ENCODE measurements at regions of chr12 and their contacts with region 1.

Region 1: DNA sequence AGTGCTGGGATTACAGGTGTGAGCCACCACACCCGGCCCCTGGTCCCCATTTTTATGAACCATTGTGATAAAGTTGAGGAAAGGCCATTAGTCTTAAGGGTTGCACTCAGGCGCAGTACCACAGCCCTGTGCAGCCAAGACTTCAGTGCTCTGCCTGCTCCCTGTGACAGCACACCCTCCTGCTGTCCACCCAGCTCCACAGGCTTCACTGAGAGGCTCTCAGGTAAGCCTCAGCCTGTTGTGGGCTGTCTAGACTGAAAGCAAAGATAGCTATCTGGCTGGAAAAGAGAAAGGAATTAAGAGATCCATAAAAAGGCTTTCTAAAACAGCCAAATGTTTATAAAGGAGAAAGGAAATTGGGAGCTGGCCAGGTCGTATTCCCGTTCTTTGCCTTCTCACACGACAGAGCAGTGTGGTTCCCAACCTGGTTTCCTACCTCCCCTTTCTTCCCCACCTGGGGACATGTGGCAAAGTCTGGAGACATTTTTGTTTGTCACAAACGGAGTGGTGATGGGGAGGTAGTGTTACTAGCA is 19.1 kb upstream of the DNM1L start:
- DNase-seq: no peak
- ATAC-seq: no peak
- H3K4me3 ChIP-seq: no peak overlapping the region
- H3K27ac ChIP-seq: peak overlapping the region; percentile 66
- H3K4me1 ChIP-seq: peaks cover 7% of the 10 kb centered on the region
- H3K27me3 ChIP-seq: no peaks in the 10 kb centered on the region

Region 2: GRCh38 chr12:31659087-31659933 is 1000.7 kb before region 1 on chr12 and contains the start of gene ETFBKMT:
- intact Hi-C with region 1: loop called in 1 of 4 experiments (anchors 10 kb)
- DNase-seq: peak; percentile 85 to 93 (median 93)
- ATAC-seq: peak; percentile 96
- H3K4me3 ChIP-seq: peak within 1 kb of the TSS; percentile 88
- H3K27ac ChIP-seq: peak within 1 kb of the TSS; percentile 97
- H3K4me1 ChIP-seq: no peaks in the 10 kb centered on the region
- H3K27me3 ChIP-seq: no peaks in the 10 kb centered on the region
- total RNA-seq, gene ETFBKMT: 4.8 to 6.9 (median 5.8) TPM

Region 3: DNA sequence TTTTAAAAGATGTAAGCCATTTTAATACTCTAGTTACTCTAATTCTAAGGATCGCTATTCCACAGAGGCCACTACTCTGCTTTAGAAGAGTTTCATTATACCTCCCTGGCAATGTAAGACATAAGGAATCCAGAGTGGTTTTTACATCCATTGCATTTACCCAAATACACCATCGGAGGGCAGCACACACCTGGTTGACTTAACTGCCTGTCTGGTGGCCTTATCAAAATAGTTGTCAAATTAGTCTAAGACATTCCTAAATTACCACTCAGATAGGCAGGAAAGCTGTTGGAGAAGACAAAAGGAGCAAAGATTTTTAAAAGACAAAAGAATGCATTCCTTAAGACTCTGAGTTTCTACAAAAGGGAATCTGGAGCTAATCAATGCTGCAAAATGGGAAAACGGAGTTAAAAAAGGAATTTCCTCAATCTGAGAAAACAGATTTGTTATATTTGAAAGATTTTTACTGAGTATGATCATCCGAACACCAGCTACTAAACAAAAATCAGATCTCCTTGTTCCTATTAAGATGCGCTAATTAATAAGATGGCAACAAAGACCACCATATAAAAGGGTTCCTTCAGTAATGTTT is 294.4 kb before region 1 on chr12:
- intact Hi-C with region 1: loop called in 2 of 4 experiments (anchors 5 kb)
- DNase-seq: peak in 1 of 3 donors; percentile 58
- ATAC-seq: peak; percentile 60 to 76
- H3K4me3 ChIP-seq: no peak overlapping the region
- H3K27ac ChIP-seq: no peak overlapping the region
- H3K4me1 ChIP-seq: no peaks in the 10 kb centered on the region
- H3K27me3 ChIP-seq: no peaks in the 10 kb centered on the region

Region 4: DNA sequence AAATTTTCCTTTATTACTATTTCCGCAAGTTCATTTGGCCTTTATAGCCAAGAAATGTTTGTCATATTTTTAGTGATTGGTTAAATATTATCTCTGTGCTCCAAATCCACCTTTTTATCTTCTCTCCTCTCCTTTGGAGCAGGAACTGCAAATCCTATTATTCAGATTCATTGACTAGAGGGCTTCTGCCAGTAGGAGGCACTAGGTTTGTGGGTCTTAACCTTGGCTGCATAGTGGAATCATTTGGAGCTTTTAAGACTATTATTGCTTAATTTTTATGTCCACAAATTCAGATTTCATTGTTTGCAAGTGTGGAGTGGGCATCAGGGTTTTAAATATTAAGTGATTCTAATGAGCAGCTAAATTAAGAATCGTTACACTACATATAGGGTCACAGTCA is 854.9 kb after region 1 on chr12:
- intact Hi-C with region 1: no loop called
- DNase-seq: no peak
- ATAC-seq: no peak
- H3K4me3 ChIP-seq: no peak overlapping the region
- H3K27ac ChIP-seq: no peak overlapping the region
- H3K4me1 ChIP-seq: no peaks in the 10 kb centered on the region
- H3K27me3 ChIP-seq: no peaks in the 10 kb centered on the region